CD4-positive, alpha-beta T cell (primary cell): ENCODE measurements at regions of chr16 and their contacts with region 1.

Region 1: GRCh38 chr16:50741808-50742575 is at the start of gene CYLD:
- DNase-seq: peak; percentile 98 to 100 (median 99)
- ATAC-seq: peak; percentile 88
- H3K4me3 ChIP-seq: peak within 1 kb of the TSS; percentile 80
- H3K4me3 Mint-ChIP-seq: peak within 1 kb of the TSS; percentile 99
- H3K27ac ChIP-seq: peak within 1 kb of the TSS; percentile 97 to 99
- H3K27ac Mint-ChIP-seq: peak within 1 kb of the TSS; percentile 87
- H3K4me1 ChIP-seq: peaks cover 15% of the 10 kb centered on the region
- H3K4me1 Mint-ChIP-seq: peaks cover 48% of the 10 kb centered on the region
- H3K27me3 ChIP-seq: no peaks in the 10 kb centered on the region
- H3K27me3 Mint-ChIP-seq: no peaks in the 10 kb centered on the region
- CTCF ChIP-seq: no peak
- total RNA-seq, gene CYLD: 360 to 373 TPM

Region 2: GRCh38 chr16:50024684-50025536 is 717.1 kb before region 1 on chr16 and contains the start of gene CNEP1R1:
- CTCF ChIA-PET with region 1: no interaction called
- POLR2A ChIA-PET with region 1: interaction called, 8 read pairs
- intact Hi-C with region 1: loop called in 1 of 2 experiments (anchors 5 kb)
- DNase-seq: peak; percentile 83 to 97 (median 91)
- ATAC-seq: peak; percentile 90
- H3K4me3 ChIP-seq: peak within 1 kb of the TSS; percentile 90
- H3K4me3 Mint-ChIP-seq: peak within 1 kb of the TSS; percentile 94
- H3K27ac ChIP-seq: peak within 1 kb of the TSS; percentile 58
- H3K27ac Mint-ChIP-seq: peak within 1 kb of the TSS; percentile 90
- H3K4me1 ChIP-seq: peaks cover 25% of the 10 kb centered on the region
- H3K4me1 Mint-ChIP-seq: peaks cover 38% of the 10 kb centered on the region
- H3K27me3 ChIP-seq: no peaks in the 10 kb centered on the region
- H3K27me3 Mint-ChIP-seq: no peaks in the 10 kb centered on the region
- CTCF ChIP-seq: peak; percentile 99
- total RNA-seq, gene CNEP1R1: 36.6 to 46.3 TPM

Region 3: GRCh38 chr16:50160495-50161164 is 581.4 kb before region 1 on chr16:
- CTCF ChIA-PET with region 1: no interaction called
- POLR2A ChIA-PET with region 1: interaction called, 5 read pairs
- intact Hi-C with region 1: loop called (anchors 5 to 10 kb)
- DNase-seq: peak in 3 of 14 experiments; percentile 42 to 65 (median 47)
- ATAC-seq: peak; percentile 82
- H3K4me3 ChIP-seq: no peak overlapping the region
- H3K4me3 Mint-ChIP-seq: peak overlapping the region; percentile 58
- H3K27ac ChIP-seq: no peak overlapping the region
- H3K27ac Mint-ChIP-seq: peak overlapping the region; percentile 86
- H3K4me1 ChIP-seq: peaks cover 39% of the 10 kb centered on the region
- H3K4me1 Mint-ChIP-seq: peaks cover 68% of the 10 kb centered on the region
- H3K27me3 ChIP-seq: no peaks in the 10 kb centered on the region
- H3K27me3 Mint-ChIP-seq: no peaks in the 10 kb centered on the region
- CTCF ChIP-seq: no peak

Region 4: GRCh38 chr16:50326949-50327402 is 415.0 kb before region 1 on chr16:
- CTCF ChIA-PET with region 1: no interaction called
- POLR2A ChIA-PET with region 1: interaction called, 11 read pairs
- intact Hi-C with region 1: no loop called
- DNase-seq: peak; percentile 39 to 93 (median 62)
- ATAC-seq: peak; percentile 92
- H3K4me3 ChIP-seq: no peak overlapping the region
- H3K4me3 Mint-ChIP-seq: no peak overlapping the region
- H3K27ac ChIP-seq: peak overlapping the region in 1 of 2 donors; percentile 20
- H3K27ac Mint-ChIP-seq: peak overlapping the region; percentile 84
- H3K4me1 ChIP-seq: peaks cover 38% of the 10 kb centered on the region
- H3K4me1 Mint-ChIP-seq: peaks cover 64% of the 10 kb centered on the region
- H3K27me3 ChIP-seq: no peaks in the 10 kb centered on the region
- H3K27me3 Mint-ChIP-seq: no peaks in the 10 kb centered on the region
- CTCF ChIP-seq: peak; percentile 83

Region 5: DNA sequence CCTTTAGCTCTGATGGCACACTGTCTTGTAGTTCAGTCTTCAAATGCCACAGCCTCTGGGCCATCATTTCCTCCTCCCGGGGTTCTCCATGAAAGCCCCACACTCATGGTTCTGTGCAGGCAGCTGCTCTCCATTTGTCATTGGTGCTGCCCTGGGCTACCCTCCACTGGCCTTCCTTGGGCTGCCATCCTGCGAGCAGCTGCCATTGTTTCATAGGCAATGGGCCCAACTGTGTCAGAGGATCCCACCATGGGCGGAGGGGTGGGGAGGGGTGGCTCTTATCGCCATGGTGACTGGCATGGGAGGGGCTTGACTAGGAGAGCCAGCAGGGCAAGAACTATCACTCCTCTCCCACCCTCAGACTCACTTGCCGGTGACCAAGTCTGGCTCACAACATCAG is 334.6 kb before region 1 on chr16:
- CTCF ChIA-PET with region 1: no interaction called
- POLR2A ChIA-PET with region 1: no interaction called
- intact Hi-C with region 1: no loop called
- DNase-seq: no peak
- ATAC-seq: no peak
- H3K4me3 ChIP-seq: no peak overlapping the region
- H3K4me3 Mint-ChIP-seq: no peak overlapping the region
- H3K27ac ChIP-seq: no peak overlapping the region
- H3K27ac Mint-ChIP-seq: no peak overlapping the region
- H3K4me1 ChIP-seq: no peaks in the 10 kb centered on the region
- H3K4me1 Mint-ChIP-seq: no peaks in the 10 kb centered on the region
- H3K27me3 ChIP-seq: no peaks in the 10 kb centered on the region
- H3K27me3 Mint-ChIP-seq: no peaks in the 10 kb centered on the region
- CTCF ChIP-seq: no peak

Region 6: DNA sequence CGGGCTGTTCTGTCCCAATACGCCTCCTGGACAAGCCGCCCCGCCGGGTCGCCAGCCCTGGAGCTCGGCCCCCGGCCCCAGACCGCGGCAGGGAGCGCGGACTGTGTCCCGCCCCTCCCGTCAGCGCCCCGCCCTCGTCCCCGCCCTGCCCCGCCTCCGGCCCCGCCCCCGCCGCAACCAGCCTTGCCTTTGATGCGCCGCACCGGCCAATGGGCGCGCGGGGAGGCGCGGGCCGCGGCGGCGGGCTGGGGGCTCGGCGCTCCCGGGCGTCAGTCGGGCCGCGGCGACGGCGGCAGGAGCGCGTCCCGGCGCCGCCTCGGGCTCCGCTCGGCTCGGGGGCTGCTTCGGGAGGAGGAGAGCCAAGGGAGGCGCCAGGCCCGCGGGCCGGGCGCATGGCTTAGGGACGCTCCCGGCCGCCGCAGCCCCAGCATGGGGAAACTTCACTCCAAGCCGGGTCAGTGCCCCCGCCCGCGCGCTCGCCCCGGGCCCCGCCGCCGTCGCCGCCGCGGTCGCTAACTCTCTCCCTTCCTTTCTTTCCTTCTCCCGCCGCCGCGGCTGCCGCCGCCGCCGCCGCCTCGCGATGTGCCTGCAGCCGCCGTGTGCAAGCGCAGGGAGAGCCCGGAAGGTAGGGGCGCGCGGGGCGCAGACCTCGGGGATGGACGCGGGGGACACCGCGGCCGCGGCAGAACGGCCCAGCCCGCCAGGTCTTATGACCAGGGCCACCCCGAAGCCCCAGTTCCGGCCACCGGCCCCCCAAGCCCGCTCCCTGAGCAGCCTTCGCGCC is 193.7 kb before region 1 on chr16 and contains the start of gene NKD1:
- CTCF ChIA-PET with region 1: no interaction called
- POLR2A ChIA-PET with region 1: interaction called, 3 read pairs
- intact Hi-C with region 1: loop called (anchors 2 kb)
- DNase-seq: peak; percentile 56 to 89 (median 71)
- ATAC-seq: peak; percentile 66
- H3K4me3 ChIP-seq: peak within 1 kb of the TSS; percentile 75
- H3K4me3 Mint-ChIP-seq: peak within 1 kb of the TSS; percentile 93
- H3K27ac ChIP-seq: peak within 1 kb of the TSS in 1 of 2 donors; percentile 65
- H3K27ac Mint-ChIP-seq: peak within 1 kb of the TSS; percentile 88
- H3K4me1 ChIP-seq: peaks cover 39% of the 10 kb centered on the region
- H3K4me1 Mint-ChIP-seq: peaks cover 48% of the 10 kb centered on the region
- H3K27me3 ChIP-seq: no peaks in the 10 kb centered on the region
- H3K27me3 Mint-ChIP-seq: no peaks in the 10 kb centered on the region
- CTCF ChIP-seq: no peak
- total RNA-seq, gene NKD1: 6.1 to 9.8 TPM

Region 7: DNA sequence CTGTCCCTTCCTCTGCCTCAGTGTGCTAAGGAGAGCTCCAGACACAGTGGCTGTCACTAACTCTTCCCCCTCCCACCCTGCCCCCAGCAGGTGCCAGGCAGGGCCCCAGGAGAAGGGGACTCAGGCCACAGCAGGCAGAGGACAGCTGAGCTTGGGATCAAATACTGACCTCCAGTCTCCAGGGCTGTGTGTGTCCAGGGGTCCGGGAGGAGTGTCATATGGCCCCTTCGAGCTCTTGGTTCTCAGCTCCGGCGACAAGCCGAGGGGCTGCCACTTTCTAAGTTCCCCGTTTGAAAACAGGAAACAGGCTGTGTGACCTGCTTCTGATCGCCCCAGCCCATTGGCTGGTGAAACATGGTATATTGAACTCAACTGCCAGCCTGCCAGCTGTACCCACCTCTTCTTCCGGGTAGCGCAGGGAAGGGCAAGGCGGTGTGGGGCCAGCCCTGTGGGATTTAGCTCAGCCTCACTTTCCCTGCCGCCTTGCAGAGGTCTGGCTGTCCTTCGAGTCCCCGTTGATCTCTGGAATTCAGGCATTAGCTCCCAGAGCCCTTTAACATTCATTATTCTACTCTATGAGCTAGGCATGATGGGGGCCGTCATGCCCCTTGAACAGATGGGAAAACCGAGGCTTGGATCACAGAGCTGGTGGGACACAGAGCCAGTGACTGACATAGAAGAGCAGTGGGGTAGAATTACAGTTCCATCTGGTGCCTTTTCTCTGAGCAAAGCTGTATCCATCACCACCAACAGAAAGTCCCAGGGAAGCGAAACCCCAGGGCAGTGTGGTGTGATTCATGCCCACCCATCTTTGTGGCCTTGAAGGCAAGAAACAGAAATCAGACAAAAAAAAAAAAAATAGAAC is 60.7 kb before region 1 on chr16 and contains the start of gene SNX20:
- CTCF ChIA-PET with region 1: interaction called, 7 read pairs
- POLR2A ChIA-PET with region 1: interaction called, 167 read pairs
- intact Hi-C with region 1: loop called (anchors 2 kb)
- DNase-seq: peak in 13 of 14 experiments; percentile 57 to 90 (median 69)
- ATAC-seq: peak; percentile 82
- H3K4me3 ChIP-seq: peak within 1 kb of the TSS; percentile 96
- H3K4me3 Mint-ChIP-seq: peak within 1 kb of the TSS; percentile 97
- H3K27ac ChIP-seq: peak within 1 kb of the TSS; percentile 87 to 92
- H3K27ac Mint-ChIP-seq: peak within 1 kb of the TSS; percentile 84
- H3K4me1 ChIP-seq: peaks cover 91% of the 10 kb centered on the region
- H3K4me1 Mint-ChIP-seq: peaks cover 93% of the 10 kb centered on the region
- H3K27me3 ChIP-seq: no peaks in the 10 kb centered on the region
- H3K27me3 Mint-ChIP-seq: no peaks in the 10 kb centered on the region
- CTCF ChIP-seq: no peak
- total RNA-seq, gene SNX20: 26.6 TPM

Region 8: GRCh38 chr16:50719518-50720337 is 22.3 kb before region 1 on chr16:
- CTCF ChIA-PET with region 1: interaction called, 3 read pairs
- POLR2A ChIA-PET with region 1: interaction called, 19 read pairs
- intact Hi-C with region 1: no loop called
- DNase-seq: peak in 7 of 14 experiments; percentile 16 to 53 (median 38)
- ATAC-seq: peak; percentile 77
- H3K4me3 ChIP-seq: no peak overlapping the region
- H3K4me3 Mint-ChIP-seq: no peak overlapping the region
- H3K27ac ChIP-seq: no peak overlapping the region
- H3K27ac Mint-ChIP-seq: peak overlapping the region; percentile 32
- H3K4me1 ChIP-seq: peaks cover 33% of the 10 kb centered on the region
- H3K4me1 Mint-ChIP-seq: peaks cover 38% of the 10 kb centered on the region
- H3K27me3 ChIP-seq: no peaks in the 10 kb centered on the region
- H3K27me3 Mint-ChIP-seq: no peaks in the 10 kb centered on the region
- CTCF ChIP-seq: peak; percentile 19